ENCODE measurements at regions of chr1 and their contacts with region 1.

Region 1: GRCh38 chr1:159854693-159855192 is 7.7 kb downstream of the VSIG8 start:
- DNase-seq: peak; percentile 87
- ATAC-seq: peak; percentile 96
- H3K4me3 Mint-ChIP-seq: peak overlapping the region; percentile 75
- H3K27ac Mint-ChIP-seq: peak overlapping the region; percentile 58
- H3K4me1 Mint-ChIP-seq: peaks cover 10% of the 10 kb centered on the region
- H3K27me3 Mint-ChIP-seq: no peaks in the 10 kb centered on the region

Region 2: GRCh38 chr1:159780583-159781582 is 73.9 kb before region 1 on chr1 and contains the start of gene DUSP23:
- CTCF ChIA-PET with region 1: interaction called, 5 read pairs
- POLR2A ChIA-PET with region 1: no interaction called
- intact Hi-C with region 1: loop called in 1 of 2 experiments (anchors 1 kb)
- DNase-seq: peak; percentile 97
- ATAC-seq: peak; percentile 99
- H3K4me3 Mint-ChIP-seq: peak within 1 kb of the TSS; percentile 70
- H3K27ac Mint-ChIP-seq: peak within 1 kb of the TSS; percentile 14
- H3K4me1 Mint-ChIP-seq: peaks cover 12% of the 10 kb centered on the region
- H3K27me3 Mint-ChIP-seq: peaks cover 2% of the 10 kb centered on the region
- total RNA-seq, gene DUSP23: 23.9 to 26.8 TPM

Region 3: DNA sequence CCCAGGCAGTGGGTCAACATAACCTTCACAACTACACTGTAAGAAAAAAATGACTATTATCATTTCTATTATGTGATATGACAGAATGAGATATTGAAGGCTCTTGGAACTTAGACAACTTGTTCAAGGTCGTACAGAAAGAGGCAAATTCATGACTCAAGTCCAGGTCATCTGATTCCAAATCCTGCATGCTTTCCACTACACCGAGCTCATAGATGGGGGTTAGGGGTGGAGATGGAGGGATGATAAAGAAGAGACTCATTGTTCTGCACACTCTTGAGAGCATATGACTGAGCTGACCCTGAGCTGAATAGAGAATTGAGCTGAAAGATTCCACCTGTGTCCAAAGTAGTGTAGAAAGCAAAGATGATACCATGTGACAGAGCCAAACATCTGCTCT is 49.8 kb before region 1 on chr1:
- CTCF ChIA-PET with region 1: interaction called, 4 read pairs
- POLR2A ChIA-PET with region 1: no interaction called
- intact Hi-C with region 1: loop called in 1 of 2 experiments (anchors 5 kb)
- DNase-seq: no peak
- ATAC-seq: no peak
- H3K4me3 Mint-ChIP-seq: no peak overlapping the region
- H3K27ac Mint-ChIP-seq: no peak overlapping the region
- H3K4me1 Mint-ChIP-seq: peaks cover 9% of the 10 kb centered on the region
- H3K27me3 Mint-ChIP-seq: no peaks in the 10 kb centered on the region

Region 4: GRCh38 chr1:159829273-159829634 is 25.5 kb before region 1 on chr1:
- CTCF ChIA-PET with region 1: interaction called, 4 read pairs
- POLR2A ChIA-PET with region 1: no interaction called
- intact Hi-C with region 1: loop called in 1 of 2 experiments (anchors 1 kb)
- DNase-seq: peak; percentile 28
- ATAC-seq: peak; percentile 32
- H3K4me3 Mint-ChIP-seq: no peak overlapping the region
- H3K27ac Mint-ChIP-seq: no peak overlapping the region
- H3K4me1 Mint-ChIP-seq: peaks cover 39% of the 10 kb centered on the region
- H3K27me3 Mint-ChIP-seq: no peaks in the 10 kb centered on the region

Region 5: GRCh38 chr1:159953536-159954515 is 99.1 kb after region 1 on chr1 and contains the start of gene SLAMF9:
- CTCF ChIA-PET with region 1: no interaction called
- POLR2A ChIA-PET with region 1: no interaction called
- intact Hi-C with region 1: no loop called
- DNase-seq: no peak
- ATAC-seq: no peak
- H3K4me3 Mint-ChIP-seq: no peak within 1 kb of the TSS
- H3K27ac Mint-ChIP-seq: no peak within 1 kb of the TSS
- H3K4me1 Mint-ChIP-seq: peaks cover 3% of the 10 kb centered on the region
- H3K27me3 Mint-ChIP-seq: peaks cover 20% of the 10 kb centered on the region
- total RNA-seq, gene SLAMF9: not detected

Measured in activated CD4-positive, alpha-beta T cell treated with anti-CD3 and anti-CD28 coated beads for 36 hours (primary cell).